Colonic mucosa (tissue), 4 donors: ENCODE measurements at regions of chr10 and their contacts with region 1.

Region 1: DNA sequence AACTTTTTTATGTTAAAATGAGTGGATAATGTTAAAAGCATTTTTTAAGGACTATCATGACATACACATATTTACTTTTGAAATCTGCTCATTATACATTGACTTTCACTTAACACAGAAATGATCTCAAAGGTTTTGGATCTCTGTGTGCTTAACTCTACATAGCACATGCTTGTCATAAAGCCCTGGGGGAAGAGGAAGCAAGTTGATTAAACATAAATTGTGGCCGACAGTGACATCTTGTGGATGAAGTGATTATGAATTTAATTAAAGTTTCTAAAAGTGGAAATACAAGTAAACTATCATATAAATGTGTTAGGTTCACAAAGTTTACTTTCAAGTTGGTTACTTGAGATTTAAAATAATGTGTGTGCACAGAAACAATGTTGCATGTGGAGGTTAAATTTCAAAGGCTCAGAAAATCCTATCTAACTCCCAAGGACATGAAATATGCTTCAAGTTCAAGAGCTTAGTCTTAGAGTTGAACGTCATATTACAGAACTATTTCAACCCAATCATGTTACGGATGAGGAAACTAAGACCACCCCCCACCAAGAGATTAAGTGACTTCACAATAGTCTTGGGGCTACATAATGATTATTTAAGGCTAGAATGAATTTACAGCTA is 1247.7 kb downstream of the GATA3 start:
- DNase-seq: no peak
- H3K4me3 ChIP-seq: no peak overlapping the region
- H3K27ac ChIP-seq: no peak overlapping the region
- H3K4me1 ChIP-seq: no peaks in the 10 kb centered on the region
- H3K27me3 ChIP-seq: no peaks in the 10 kb centered on the region
- CTCF ChIP-seq: peak; percentile 24

Region 2: GRCh38 chr10:7525314-7526016 is 1776.8 kb before region 1 on chr10:
- intact Hi-C with region 1: loop called (anchors 5 kb)
- DNase-seq: peak; percentile 63
- H3K4me3 ChIP-seq: no peak overlapping the region
- H3K27ac ChIP-seq: no peak overlapping the region
- H3K4me1 ChIP-seq: no peaks in the 10 kb centered on the region
- H3K27me3 ChIP-seq: no peaks in the 10 kb centered on the region
- CTCF ChIP-seq: peak; percentile 62

Region 3: DNA sequence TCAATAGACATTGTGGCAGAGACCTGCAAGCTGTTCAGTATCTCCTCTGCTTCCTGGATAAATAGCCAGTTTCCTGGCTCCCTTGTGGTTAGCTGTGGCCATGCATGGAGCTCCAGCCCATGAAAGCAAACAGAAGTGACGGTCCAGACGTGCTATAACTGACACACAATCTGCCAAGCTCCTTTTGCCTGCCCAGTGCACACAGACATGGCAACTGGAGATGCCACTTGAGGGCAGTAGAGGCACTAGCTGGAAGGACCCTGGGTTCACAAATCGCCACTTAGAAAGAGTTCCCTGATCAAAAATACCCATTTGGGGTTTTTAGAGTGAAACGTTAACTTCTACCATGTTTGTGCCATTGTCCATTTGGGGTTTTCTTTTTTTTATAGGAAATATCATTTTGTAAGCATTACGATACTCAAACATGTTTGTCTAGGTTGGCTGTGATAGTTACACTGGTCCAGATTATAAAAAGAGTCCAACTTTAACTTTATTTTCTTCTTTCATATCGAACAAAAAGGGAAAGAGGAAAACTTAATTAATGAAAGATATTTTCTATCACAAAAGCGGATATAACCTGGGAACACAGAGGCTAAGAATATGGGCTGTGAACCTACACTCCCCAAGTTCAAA is 1545.8 kb before region 1 on chr10:
- intact Hi-C with region 1: loop called (anchors 10 kb)
- DNase-seq: peak; percentile 37
- H3K4me3 ChIP-seq: no peak overlapping the region
- H3K27ac ChIP-seq: no peak overlapping the region
- H3K4me1 ChIP-seq: no peaks in the 10 kb centered on the region
- H3K27me3 ChIP-seq: no peaks in the 10 kb centered on the region
- CTCF ChIP-seq: peak; percentile 36

Region 4: GRCh38 chr10:7872041-7872442 is 1430.2 kb before region 1 on chr10:
- intact Hi-C with region 1: loop called (anchors 10 kb)
- DNase-seq: no peak
- H3K4me3 ChIP-seq: no peak overlapping the region
- H3K27ac ChIP-seq: no peak overlapping the region
- H3K4me1 ChIP-seq: no peaks in the 10 kb centered on the region
- H3K27me3 ChIP-seq: no peaks in the 10 kb centered on the region
- CTCF ChIP-seq: peak; percentile 83

Region 5: GRCh38 chr10:8112226-8112905 is 1189.9 kb before region 1 on chr10:
- intact Hi-C with region 1: no loop called
- DNase-seq: no peak
- H3K4me3 ChIP-seq: no peak overlapping the region
- H3K27ac ChIP-seq: no peak overlapping the region
- H3K4me1 ChIP-seq: no peaks in the 10 kb centered on the region
- H3K27me3 ChIP-seq: no peaks in the 10 kb centered on the region
- CTCF ChIP-seq: no peak

Region 6: DNA sequence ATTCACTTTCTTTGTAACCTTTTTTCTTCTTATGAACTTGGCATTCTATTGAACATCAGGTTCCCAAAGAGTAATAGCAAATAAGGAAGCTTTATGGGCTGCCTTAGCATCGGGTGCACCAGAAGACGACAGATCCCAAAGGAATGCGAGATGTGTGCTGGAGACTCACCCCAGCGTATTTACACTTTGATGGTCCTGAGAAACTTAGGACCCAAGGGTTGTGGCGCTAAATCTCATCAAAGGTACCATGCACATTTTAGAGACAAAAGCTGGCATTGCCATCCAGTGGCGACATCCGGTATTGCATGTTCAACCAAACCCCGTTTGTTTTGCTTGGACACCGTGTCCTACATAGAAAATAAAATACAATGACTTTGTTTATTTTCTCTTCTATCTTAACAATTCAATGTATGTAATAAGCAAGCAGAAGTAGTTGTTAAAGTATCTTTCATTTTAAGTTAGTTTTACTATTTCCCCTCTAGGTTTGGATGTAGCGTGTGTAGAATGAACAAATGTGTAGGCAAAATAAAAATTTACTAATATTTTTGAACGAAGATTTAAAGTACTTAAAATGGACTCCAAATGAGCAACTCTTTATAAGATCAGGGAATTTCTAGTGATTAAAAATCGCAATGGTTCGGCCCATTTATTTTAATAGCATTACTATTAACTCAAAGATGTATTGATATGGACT is 93.0 kb before region 1 on chr10:
- intact Hi-C with region 1: no loop called
- DNase-seq: peak; percentile 57
- H3K4me3 ChIP-seq: no peak overlapping the region
- H3K27ac ChIP-seq: no peak overlapping the region
- H3K4me1 ChIP-seq: no peaks in the 10 kb centered on the region
- H3K27me3 ChIP-seq: no peaks in the 10 kb centered on the region
- CTCF ChIP-seq: peak; percentile 84